ENCODE measurements at regions of chr14 and their contacts with region 1.

Region 1: GRCh38 chr14:22556990-22557623 is 31.9 kb downstream of the DAD1 start:
- DNase-seq: peak; percentile 90 to 93 (median 92)
- ATAC-seq: peak; percentile 70
- H3K4me3 ChIP-seq: no peak overlapping the region
- H3K4me1 ChIP-seq: peaks cover 45% of the 10 kb centered on the region
- CTCF ChIP-seq: peak; percentile 96

Region 2: GRCh38 chr14:22646570-22647254 is 89.6 kb after region 1 on chr14:
- intact Hi-C with region 1: loop called (anchors 5 to 10 kb)
- DNase-seq: no peak
- ATAC-seq: no peak
- H3K4me3 ChIP-seq: no peak overlapping the region
- H3K4me1 ChIP-seq: no peaks in the 10 kb centered on the region
- CTCF ChIP-seq: no peak

Region 3: GRCh38 chr14:22653012-22653621 is 96.0 kb after region 1 on chr14:
- intact Hi-C with region 1: loop called (anchors 5 to 10 kb)
- DNase-seq: peak in 2 of 3 donors; percentile 70 to 82
- ATAC-seq: peak; percentile 90
- H3K4me3 ChIP-seq: no peak overlapping the region
- H3K4me1 ChIP-seq: no peaks in the 10 kb centered on the region
- CTCF ChIP-seq: peak; percentile 71

Measured in mucosa of descending colon (tissue), 3 donors.